PC-3 (cell line): ENCODE measurements at regions of chr7 and their contacts with region 1.

Region 1: GRCh38 chr7:47301105-47301477 is 280.8 kb downstream of the TNS3 start:
- DNase-seq: no peak
- ATAC-seq: no peak
- H3K4me3 ChIP-seq: no peak overlapping the region
- H3K27ac ChIP-seq: no peak overlapping the region
- H3K4me1 ChIP-seq: no peaks in the 10 kb centered on the region
- H3K27me3 ChIP-seq: no peaks in the 10 kb centered on the region
- CTCF ChIP-seq: no peak

Region 2: GRCh38 chr7:46282155-46282554 is 1018.9 kb before region 1 on chr7:
- CTCF ChIA-PET with region 1: interaction called, 11 read pairs
- POLR2A ChIA-PET with region 1: no interaction called
- intact Hi-C with region 1: no loop called
- DNase-seq: no peak
- ATAC-seq: no peak
- H3K4me3 ChIP-seq: no peak overlapping the region
- H3K27ac ChIP-seq: no peak overlapping the region
- H3K4me1 ChIP-seq: peaks cover 11% of the 10 kb centered on the region
- H3K27me3 ChIP-seq: no peaks in the 10 kb centered on the region
- CTCF ChIP-seq: no peak

Region 3: DNA sequence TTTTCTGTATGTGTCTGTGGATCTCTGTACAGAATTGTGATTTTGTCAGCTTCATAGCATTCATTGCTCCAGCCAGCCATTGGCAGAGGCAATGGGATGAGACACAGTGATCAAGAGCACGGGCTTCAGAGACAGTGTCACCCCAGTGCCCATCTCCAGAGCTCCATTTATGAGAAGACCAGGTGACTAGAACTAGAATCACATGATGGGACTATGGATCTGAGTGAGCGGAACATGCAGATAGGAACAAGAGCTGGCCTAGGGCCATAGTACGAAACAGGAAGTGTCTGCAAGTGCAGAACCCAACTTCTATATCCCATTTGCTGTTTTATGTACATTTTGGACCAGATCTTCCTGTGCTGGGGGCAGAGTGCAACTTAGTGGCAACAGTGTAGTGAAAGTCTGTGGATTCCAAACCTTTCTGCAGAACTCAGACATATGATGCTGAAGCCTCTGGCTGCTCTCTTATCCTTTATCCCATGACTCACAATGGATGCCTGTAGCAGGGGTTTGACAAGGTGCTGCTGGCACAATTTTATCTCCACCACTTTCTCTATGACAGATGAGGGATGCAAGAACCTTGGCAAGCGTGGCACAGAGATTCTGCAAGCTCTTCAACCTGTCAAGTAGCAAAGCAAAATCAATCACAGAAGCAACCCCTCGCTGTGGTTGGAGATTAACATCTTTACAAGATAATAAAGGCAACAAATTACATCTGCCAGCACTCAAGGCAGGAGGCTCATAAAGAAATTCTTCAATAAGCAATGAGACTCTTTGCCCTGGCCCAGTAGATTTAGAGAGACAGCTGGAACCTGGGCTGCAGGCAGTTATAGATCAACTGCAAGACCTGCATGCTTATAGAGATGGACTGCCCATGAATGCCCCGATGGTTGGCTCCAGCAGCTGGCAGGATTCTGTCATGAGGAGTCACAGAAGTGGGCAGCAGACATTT is 400.5 kb before region 1 on chr7:
- CTCF ChIA-PET with region 1: no interaction called
- POLR2A ChIA-PET with region 1: no interaction called
- intact Hi-C with region 1: no loop called
- DNase-seq: peak; percentile 3
- ATAC-seq: peak; percentile 27
- H3K4me3 ChIP-seq: no peak overlapping the region
- H3K27ac ChIP-seq: no peak overlapping the region
- H3K4me1 ChIP-seq: no peaks in the 10 kb centered on the region
- H3K27me3 ChIP-seq: no peaks in the 10 kb centered on the region
- CTCF ChIP-seq: no peak

Region 4: DNA sequence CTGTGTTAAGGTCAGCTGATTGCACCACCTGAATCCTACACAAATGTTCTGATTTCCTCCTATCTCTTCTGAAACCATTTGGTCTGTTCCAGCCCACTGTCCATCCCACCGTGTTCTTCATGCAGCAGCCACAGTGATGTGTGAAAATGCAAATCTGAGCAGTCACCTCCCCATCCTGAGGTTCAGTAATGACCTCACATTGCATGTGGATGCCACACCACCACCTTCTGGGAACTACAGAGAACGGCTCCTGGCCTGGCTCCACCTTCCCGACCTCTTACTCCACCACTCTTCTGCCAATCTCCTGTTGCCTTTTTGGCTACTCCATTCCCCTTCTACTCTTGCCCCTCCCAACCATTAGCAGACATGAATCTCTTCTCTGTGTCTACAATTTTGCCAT is 36.4 kb after region 1 on chr7:
- CTCF ChIA-PET with region 1: interaction called, 5 read pairs
- POLR2A ChIA-PET with region 1: interaction called, 14 read pairs
- intact Hi-C with region 1: no loop called
- DNase-seq: no peak
- ATAC-seq: peak; percentile 30; the same call in 1 of the 2 replicates
- H3K4me3 ChIP-seq: no peak overlapping the region
- H3K27ac ChIP-seq: no peak overlapping the region
- H3K4me1 ChIP-seq: no peaks in the 10 kb centered on the region
- H3K27me3 ChIP-seq: no peaks in the 10 kb centered on the region
- CTCF ChIP-seq: 0 out of 2 replicates have a peak, but pooled peaks have one; percentile 16

Region 5: GRCh38 chr7:47833211-47833610 is 532.1 kb after region 1 on chr7:
- CTCF ChIA-PET with region 1: no interaction called
- POLR2A ChIA-PET with region 1: interaction called, 18 read pairs
- intact Hi-C with region 1: no loop called
- DNase-seq: no peak
- ATAC-seq: no peak
- H3K4me3 ChIP-seq: no peak overlapping the region
- H3K27ac ChIP-seq: no peak overlapping the region
- H3K4me1 ChIP-seq: no peaks in the 10 kb centered on the region
- H3K27me3 ChIP-seq: no peaks in the 10 kb centered on the region
- CTCF ChIP-seq: no peak